Activated naive CD8-positive, alpha-beta T cell treated with anti-CD3 and anti-CD28 coated beads, Interleukin-2, amount 10 ng/mL, durations not matched to agents 7 days and 5 days (primary cell): ENCODE measurements at regions of chr16 and their contacts with region 1.

Region 1: DNA sequence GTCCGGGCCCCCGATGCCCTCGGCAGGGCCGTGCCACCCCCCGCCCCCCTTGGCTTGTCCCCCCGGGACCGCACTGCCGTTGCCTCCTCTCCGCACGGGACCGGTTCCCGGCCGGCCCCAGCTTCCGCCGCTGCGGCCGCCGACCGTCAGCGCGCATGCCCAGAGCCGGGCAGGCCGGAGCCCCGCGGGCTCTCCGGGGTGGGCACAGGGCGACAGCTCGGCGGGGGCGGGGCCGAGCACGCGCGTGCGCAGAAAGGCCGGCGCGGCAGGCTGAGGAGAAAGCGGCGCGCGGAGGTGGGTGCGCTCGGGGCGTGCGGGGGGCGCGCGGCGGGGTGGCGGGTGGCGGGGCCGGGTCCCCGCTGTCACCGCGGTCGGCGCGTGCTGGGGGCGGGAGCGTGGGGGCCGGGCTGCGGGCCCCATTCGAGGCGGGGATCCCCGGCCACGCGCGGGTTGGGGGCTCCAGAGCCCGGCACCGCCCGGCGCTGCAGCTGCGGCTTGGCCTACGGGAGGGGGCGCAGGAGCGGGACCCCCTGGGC is at the start of gene TBC1D24:
- DNase-seq: peak; percentile 93
- ATAC-seq: peak; percentile 72
- H3K4me3 Mint-ChIP-seq: peak within 1 kb of the TSS; percentile 71
- H3K27ac Mint-ChIP-seq: peak within 1 kb of the TSS; percentile 45
- H3K4me1 Mint-ChIP-seq: peaks cover 9% of the 10 kb centered on the region
- H3K27me3 Mint-ChIP-seq: peaks cover 18% of the 10 kb centered on the region
- total RNA-seq, gene TBC1D24: 16.5 to 17.9 TPM

Region 2: GRCh38 chr16:2486645-2487516 is 11.9 kb after region 1 on chr16:
- POLR2A ChIA-PET with region 1: interaction called, 11 read pairs
- DNase-seq: peak; percentile 67
- ATAC-seq: peak; percentile 93
- H3K4me3 Mint-ChIP-seq: peak overlapping the region; percentile 64
- H3K27ac Mint-ChIP-seq: peak overlapping the region; percentile 73
- H3K4me1 Mint-ChIP-seq: peaks cover 15% of the 10 kb centered on the region
- H3K27me3 Mint-ChIP-seq: no peaks in the 10 kb centered on the region

Region 3: DNA sequence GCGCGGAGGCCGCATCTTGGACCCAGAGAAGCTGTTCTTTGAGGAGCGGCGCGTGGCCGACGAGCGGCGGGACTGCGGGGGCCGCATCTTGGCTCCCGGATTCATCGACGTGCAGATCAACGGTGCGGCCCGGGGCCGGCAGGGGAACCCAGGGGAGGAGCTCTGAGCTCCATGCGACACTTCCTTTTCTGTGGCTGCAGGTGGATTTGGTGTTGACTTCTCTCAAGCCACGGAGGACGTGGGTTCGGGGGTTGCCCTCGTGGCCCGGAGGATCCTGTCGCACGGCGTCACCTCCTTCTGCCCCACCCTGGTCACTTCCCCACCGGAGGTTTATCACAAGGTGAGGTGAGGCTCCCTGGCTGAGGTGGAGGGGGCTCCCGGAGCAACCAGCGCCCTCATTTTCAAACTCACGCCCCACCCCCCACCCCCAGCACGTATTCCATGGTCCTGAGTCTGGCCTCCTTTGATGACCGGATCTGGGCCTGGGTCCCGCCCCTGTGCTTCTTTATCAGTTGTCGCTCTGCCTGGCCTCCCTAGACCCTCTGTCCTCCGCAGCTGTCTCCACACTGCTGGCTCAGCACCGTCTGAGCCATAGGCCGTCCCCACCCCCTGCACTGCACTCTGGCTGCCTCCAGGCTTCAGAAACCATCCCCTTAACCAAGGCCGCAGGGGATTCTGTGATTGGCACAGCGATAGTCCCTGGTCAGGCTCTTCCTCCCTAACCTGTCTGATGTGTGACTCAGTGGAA is 46.0 kb after region 1 on chr16:
- POLR2A ChIA-PET with region 1: no interaction called
- DNase-seq: peak; percentile 72
- ATAC-seq: peak; percentile 65
- H3K4me3 Mint-ChIP-seq: peak overlapping the region; percentile 83
- H3K27ac Mint-ChIP-seq: peak overlapping the region; percentile 88
- H3K4me1 Mint-ChIP-seq: peaks cover 27% of the 10 kb centered on the region
- H3K27me3 Mint-ChIP-seq: no peaks in the 10 kb centered on the region